A549 (cell line): ENCODE measurements at regions of chr14 and their contacts with region 1.

Region 1: DNA sequence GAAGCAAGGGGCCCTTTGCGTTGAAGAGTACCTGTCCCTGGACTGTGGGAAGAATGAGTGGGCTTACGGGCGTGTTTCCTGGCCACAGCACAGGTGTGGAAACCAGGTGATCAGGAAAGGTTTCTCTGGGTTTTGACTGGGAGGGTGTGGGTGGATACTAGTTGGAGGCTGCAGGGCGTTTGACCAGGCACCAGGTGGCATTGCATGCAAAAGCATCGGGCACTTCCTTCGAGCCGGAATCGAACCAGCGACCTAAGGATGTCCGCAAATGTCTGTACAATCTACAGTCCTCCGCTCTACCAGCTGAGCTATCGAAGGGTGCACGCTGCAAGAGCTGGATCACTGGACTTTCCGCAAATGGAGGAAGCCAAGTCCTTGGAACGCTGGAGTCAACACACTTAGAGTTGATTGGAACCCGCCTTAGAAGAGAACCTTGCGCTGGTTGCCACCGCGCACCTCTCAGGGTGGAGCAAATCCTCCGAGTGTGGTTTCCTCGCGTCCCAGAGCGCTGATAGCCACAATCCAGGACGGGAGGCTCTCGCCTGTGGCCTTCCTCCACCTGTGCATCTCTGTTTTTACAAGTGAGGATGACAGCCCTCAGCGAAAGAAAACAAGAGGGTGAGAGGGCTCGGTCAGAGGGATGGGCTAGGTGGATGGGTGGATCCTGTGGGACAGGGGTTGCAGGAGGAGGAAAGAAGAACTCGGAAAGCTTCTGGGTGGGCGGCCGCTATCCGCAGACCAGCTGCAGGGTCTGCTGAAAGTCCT is 21.2 kb upstream of the RNASE4 start:
- DNase-seq: peak; percentile 74 to 99
- ATAC-seq: peak; percentile 90 to 93
- H3K4me3 ChIP-seq: peak overlapping the region; percentile 56
- H3K27ac ChIP-seq: peak overlapping the region; percentile 34 to 73
- H3K4me1 ChIP-seq: peaks cover 2% of the 10 kb centered on the region; the same call in 1 of the 3 replicates
- CTCF ChIP-seq: peak; percentile 46
- EP300 ChIP-seq: no peak
- POLR2A ChIP-seq: no peak
- RAD21 ChIP-seq: peak; percentile 57 to 71

Region 2: DNA sequence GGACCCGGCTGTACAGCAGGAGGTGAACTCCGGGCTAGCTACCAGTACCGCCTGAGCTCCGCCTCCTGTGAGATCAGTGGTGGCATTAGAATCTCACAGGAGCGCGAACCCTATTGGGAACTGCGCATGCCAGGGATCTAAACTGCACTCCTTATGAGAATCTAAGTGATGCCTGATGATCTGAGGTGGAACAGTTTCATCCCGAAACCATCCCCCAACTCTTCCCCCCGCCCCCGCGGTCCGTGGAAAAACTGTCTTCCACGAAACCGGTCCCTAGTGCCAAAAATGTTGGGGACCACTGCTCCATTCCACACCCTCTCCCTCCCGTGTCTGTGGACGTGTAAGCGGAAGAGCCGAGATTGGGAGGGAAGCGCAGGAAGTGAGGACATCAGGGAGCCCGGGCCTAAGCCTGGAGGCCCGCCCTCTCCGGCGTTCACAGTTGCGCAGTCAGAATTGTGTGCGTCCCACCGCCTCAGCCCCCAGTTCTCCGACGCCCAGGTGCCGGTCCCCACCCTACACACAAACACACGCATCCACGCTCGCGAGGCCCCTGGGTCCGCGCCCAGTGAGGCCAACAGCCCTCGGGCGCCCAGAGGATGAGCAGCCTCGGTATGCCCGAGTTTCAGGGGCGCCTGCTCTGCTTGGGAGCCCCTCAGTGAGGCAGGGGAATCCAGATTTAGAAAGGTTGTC is 19.4 kb after region 1 on chr14:
- CTCF ChIA-PET with region 1: interaction called, 191 read pairs
- POLR2A ChIA-PET with region 1: interaction called, 21 read pairs
- DNase-seq: peak; percentile 81 to 96
- ATAC-seq: peak; percentile 67 to 77
- H3K4me3 ChIP-seq: peak overlapping the region; percentile 58
- H3K27ac ChIP-seq: peak overlapping the region; percentile 95
- H3K4me1 ChIP-seq: peaks cover 33% of the 10 kb centered on the region
- CTCF ChIP-seq: no peak
- EP300 ChIP-seq: no peak
- POLR2A ChIP-seq: peak; percentile 80
- RAD21 ChIP-seq: no peak

Region 3: GRCh38 chr14:20690848-20691523 is 27.8 kb after region 1 on chr14:
- CTCF ChIA-PET with region 1: interaction called, 191 read pairs
- POLR2A ChIA-PET with region 1: no interaction called
- DNase-seq: peak; percentile 71 to 81
- ATAC-seq: peak; percentile 82 to 84
- H3K4me3 ChIP-seq: peak overlapping the region; percentile 5; the same call in 1 of the 3 replicates
- H3K27ac ChIP-seq: peak overlapping the region; percentile 2 to 26; a peak in 1 of 6 replicates
- H3K4me1 ChIP-seq: peaks cover 34% of the 10 kb centered on the region
- CTCF ChIP-seq: peak; percentile 88
- EP300 ChIP-seq: no peak
- POLR2A ChIP-seq: no peak
- RAD21 ChIP-seq: peak; percentile 88 to 92